K562 (cell line): ENCODE measurements at regions of chr17 and their contacts with region 1.

Region 1: DNA sequence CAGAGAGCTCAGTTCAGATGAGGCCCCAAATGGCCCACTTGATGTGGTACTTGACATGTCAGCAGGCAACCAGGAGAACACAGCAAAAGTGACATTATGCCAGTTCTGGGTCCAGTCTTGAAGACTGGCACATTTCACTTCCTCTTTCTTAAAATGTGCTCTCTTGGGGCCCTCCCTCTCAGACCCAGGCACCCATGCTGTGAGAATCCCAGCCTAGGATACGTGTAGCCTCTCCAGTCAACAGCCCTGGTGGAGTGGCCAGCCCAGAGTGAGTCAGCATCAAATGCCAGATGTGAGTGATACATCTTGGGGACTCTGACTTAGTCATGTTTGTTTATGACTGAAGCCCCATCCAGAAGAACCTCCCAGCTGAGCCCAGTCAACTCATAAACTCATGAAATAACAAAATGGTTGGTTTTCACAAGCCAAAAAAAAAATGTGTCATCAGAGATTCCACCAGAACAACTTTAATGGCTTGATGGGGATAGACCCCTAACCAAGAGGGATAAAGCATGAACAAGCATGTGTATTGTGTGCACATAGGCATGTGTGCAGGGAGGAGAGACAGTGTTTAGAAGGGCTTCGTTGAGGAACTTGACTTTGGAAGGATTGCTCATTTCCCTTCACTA is 82.5 kb upstream of the TNRC6C start:
- DNase-seq: peak; percentile 87 to 93 (median 90)
- ATAC-seq: peak; percentile 99
- H3K4me3 ChIP-seq: no peak overlapping the region
- H3K27ac ChIP-seq: peak overlapping the region; percentile 78; the same call in 2 of the 3 replicates
- H3K4me1 ChIP-seq: peaks cover 9 to 37% of the 10 kb centered on the region in 2 experiments
- H3K27me3 ChIP-seq: peaks cover 3 to 21% of the 10 kb centered on the region in 2 experiments; a peak in 4 of 5 replicates
- CTCF ChIP-seq: no peak
- EP300 ChIP-seq: peak; percentile 63; the same call in 1 of the 2 replicates
- POLR2A ChIP-seq: no peak
- RAD21 ChIP-seq: no peak

Region 2: GRCh38 chr17:77887464-77888241 is 11.7 kb after region 1 on chr17:
- CTCF ChIA-PET with region 1: no interaction called
- POLR2A ChIA-PET with region 1: interaction called, 17 read pairs
- in situ Hi-C with region 1: no loop called
- intact Hi-C with region 1: no loop called
- DNase-seq: peak in 3 of 4 experiments; percentile 39 to 53 (median 41)
- ATAC-seq: peak; percentile 52
- H3K4me3 ChIP-seq: peak overlapping the region; percentile 12; the same call in 1 of the 2 replicates
- H3K27ac ChIP-seq: no peak overlapping the region
- H3K4me1 ChIP-seq: peaks cover 19 to 28% of the 10 kb centered on the region in 2 experiments
- H3K27me3 ChIP-seq: peaks cover 25 to 70% of the 10 kb centered on the region in 2 experiments; a peak in 4 of 5 replicates
- CTCF ChIP-seq: no peak
- EP300 ChIP-seq: no peak
- POLR2A ChIP-seq: no peak
- RAD21 ChIP-seq: no peak